SK-N-SH (cell line): ENCODE measurements at regions of chr9 and their contacts with region 1.

Region 1: DNA sequence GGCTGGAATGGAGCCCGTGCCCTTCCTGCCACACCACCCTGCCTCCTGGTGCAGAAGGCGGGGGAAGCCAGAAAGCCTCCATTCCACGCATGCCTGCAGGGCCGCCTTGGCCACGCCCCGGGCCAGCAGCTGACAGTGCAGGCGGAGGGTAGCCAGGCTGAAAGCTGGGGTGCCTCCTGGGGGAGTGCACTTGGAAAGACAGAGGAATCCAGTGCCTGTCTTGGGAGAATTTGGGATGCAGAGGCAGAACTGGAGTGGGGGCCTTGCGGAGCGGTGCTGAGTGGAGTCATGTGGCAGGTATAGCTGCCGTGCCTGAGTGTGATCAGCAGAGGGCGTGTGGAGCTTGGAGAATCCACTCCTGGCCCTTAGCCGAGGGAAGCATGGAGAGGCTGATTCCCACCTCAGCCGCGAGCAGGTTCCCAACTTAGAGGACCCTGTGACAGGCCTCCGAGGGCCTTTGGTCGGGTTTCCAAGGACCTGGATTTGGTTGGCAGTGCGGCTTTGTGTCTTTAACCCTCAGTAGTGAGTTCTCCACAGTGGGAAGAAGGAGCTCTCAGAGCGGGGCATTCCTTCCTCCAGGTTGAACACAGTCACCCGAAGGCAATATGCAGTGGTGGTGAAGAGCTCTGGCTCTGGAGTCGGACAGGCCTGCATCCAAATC is 9.1 kb upstream of the URM1 start:
- DNase-seq: peak; percentile 92
- H3K4me3 ChIP-seq: peak overlapping the region; percentile 43 to 58
- H3K27ac ChIP-seq: peak overlapping the region; percentile 29 to 72; a peak in 3 of 4 replicates
- H3K4me1 ChIP-seq: peaks cover 7 to 8% of the 10 kb centered on the region in 2 experiments; a peak in 2 of 4 replicates
- H3K27me3 ChIP-seq: no peaks in the 10 kb centered on the region
- CTCF ChIP-seq: peak; percentile 90
- EP300 ChIP-seq: no peak
- RAD21 ChIP-seq: peak; percentile 86

Region 2: DNA sequence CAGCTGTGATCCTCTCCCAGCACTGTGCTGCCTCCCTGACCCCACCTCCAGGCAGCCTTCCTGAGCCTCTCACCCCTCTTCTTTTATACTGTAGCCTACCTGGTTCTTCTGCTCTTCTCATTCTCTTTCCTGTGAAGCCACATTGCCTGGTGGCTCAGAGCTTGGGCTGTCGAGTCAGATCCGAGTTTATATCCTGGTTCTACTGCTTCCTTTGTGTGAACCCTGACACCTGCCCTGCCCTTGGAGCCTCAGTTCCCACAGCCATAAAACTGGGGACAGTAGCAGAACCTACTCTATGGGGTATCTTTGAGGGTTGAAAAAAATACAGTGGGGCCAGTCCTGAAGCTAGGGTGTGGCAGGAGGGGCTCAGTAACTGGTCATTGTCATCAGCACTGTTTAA is 13.0 kb before region 1 on chr9:
- CTCF ChIA-PET with region 1: interaction called, 10 read pairs
- POLR2A ChIA-PET with region 1: no interaction called
- DNase-seq: no peak
- H3K4me3 ChIP-seq: no peak overlapping the region
- H3K27ac ChIP-seq: no peak overlapping the region
- H3K4me1 ChIP-seq: no peaks in the 10 kb centered on the region
- H3K27me3 ChIP-seq: no peaks in the 10 kb centered on the region
- CTCF ChIP-seq: no peak
- EP300 ChIP-seq: no peak
- RAD21 ChIP-seq: no peak